ENCODE measurements at regions of chr3 and their contacts with region 1.

Region 1: DNA sequence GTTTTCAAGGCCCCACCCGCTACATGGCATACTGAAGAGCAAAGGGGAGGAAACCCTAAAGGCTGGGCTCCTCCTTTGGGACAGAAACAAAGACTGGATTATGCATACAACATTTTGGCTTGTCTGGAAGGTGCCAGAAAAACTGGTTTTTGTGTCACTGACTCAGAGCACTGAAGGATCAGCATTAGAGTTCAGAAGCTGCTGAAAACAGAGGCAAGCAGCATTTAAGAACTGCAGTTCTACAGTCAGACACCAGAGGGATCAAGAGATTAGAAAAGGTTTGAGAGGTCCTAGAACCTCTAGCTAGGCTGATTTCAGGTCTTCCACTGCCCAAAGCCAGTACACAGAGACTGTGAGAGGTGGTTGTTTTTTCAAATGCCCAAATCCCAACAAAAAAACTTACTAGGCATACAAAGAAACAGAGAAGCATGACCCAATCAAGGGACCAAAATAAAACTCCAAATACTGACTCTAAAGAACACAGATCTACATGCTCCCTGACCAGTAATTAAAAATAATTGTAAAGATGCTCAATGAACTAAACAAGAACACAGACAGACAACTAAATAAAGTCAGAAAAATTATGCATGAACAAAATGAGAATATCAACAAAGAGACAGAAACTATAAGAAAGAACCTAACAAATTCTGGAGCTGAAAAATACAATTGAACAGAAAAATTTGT is 91.2 kb downstream of the SENP2 start:
- DNase-seq: no peak
- ATAC-seq: peak; percentile 90 to 96 (median 94)
- H3K4me3 ChIP-seq: no peak overlapping the region
- H3K27ac ChIP-seq: no peak overlapping the region
- H3K4me1 ChIP-seq: no peaks in the 10 kb centered on the region
- H3K27me3 ChIP-seq: no peaks in the 10 kb centered on the region
- CTCF ChIP-seq: peak; percentile 60 to 82 (median 68)
- POLR2A ChIP-seq: no peak

Region 2: GRCh38 chr3:185764163-185764979 is 87.1 kb after region 1 on chr3:
- intact Hi-C with region 1: loop called (anchors 10 kb)
- DNase-seq: no peak
- ATAC-seq: no peak
- H3K4me3 ChIP-seq: no peak overlapping the region
- H3K27ac ChIP-seq: no peak overlapping the region
- H3K4me1 ChIP-seq: peaks cover 0 to 3% (median 0%) of the 10 kb centered on the region in 4 donors
- H3K27me3 ChIP-seq: no peaks in the 10 kb centered on the region
- CTCF ChIP-seq: no peak
- POLR2A ChIP-seq: no peak

Measured in right lobe of liver (tissue), 6 donors.